ENCODE measurements at regions of chr2 and their contacts with region 1.

Region 1: GRCh38 chr2:42095923-42096408 is 48.1 kb downstream of the PKDCC start:
- DNase-seq: peak; percentile 86
- ATAC-seq: peak; percentile 64
- H3K4me3 Mint-ChIP-seq: no peak overlapping the region
- H3K27ac Mint-ChIP-seq: no peak overlapping the region
- H3K4me1 Mint-ChIP-seq: peaks cover 32% of the 10 kb centered on the region
- H3K27me3 Mint-ChIP-seq: no peaks in the 10 kb centered on the region

Region 2: DNA sequence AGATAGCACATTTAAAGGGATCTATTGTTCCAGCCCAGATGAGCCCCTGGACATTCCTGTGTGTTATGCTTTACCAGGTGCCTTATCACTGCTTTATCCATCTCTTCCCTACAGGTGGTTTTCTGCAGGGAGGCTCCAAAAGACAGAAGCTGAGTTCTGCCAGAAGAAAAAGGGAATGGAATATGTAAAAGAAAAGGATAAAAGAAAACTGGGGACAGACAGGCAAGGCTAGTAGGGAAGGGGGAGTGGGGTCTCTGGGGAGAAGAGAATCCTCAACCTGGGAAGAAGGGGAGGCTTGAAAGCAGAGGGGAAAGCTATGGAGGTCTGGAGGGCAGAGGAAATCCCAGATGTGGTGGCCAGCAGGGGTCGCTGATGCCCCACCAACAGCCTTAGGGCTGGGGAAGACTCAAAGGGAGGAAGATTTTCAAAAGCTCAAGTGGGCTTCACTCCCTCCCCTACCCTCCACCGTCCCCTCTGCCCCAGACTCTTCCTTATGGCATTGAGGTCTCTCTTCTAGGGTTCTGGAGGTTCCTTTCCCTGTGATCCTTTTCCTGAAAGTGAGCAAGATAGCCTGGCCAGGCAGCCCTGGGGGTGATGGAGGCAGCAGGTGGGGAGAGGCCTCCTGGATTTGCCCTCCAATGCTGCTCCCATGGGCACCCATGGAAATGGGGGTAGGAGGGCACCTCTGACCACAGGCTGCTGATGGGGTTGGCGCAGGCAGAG is 226.3 kb before region 1 on chr2:
- CTCF ChIA-PET with region 1: interaction called, 304 read pairs
- POLR2A ChIA-PET with region 1: no interaction called
- intact Hi-C with region 1: no loop called
- DNase-seq: peak; percentile 86
- ATAC-seq: peak; percentile 85
- H3K4me3 Mint-ChIP-seq: no peak overlapping the region
- H3K27ac Mint-ChIP-seq: no peak overlapping the region
- H3K4me1 Mint-ChIP-seq: peaks cover 6% of the 10 kb centered on the region
- H3K27me3 Mint-ChIP-seq: peaks cover 9% of the 10 kb centered on the region

Region 3: GRCh38 chr2:42196403-42197267 is 100.7 kb after region 1 on chr2:
- CTCF ChIA-PET with region 1: interaction called, 20 read pairs
- POLR2A ChIA-PET with region 1: no interaction called
- intact Hi-C with region 1: loop called (anchors 1 kb)
- DNase-seq: peak; percentile 53
- ATAC-seq: peak; percentile 51
- H3K4me3 Mint-ChIP-seq: no peak overlapping the region
- H3K27ac Mint-ChIP-seq: peak overlapping the region; percentile 5
- H3K4me1 Mint-ChIP-seq: peaks cover 80% of the 10 kb centered on the region
- H3K27me3 Mint-ChIP-seq: no peaks in the 10 kb centered on the region

Region 4: DNA sequence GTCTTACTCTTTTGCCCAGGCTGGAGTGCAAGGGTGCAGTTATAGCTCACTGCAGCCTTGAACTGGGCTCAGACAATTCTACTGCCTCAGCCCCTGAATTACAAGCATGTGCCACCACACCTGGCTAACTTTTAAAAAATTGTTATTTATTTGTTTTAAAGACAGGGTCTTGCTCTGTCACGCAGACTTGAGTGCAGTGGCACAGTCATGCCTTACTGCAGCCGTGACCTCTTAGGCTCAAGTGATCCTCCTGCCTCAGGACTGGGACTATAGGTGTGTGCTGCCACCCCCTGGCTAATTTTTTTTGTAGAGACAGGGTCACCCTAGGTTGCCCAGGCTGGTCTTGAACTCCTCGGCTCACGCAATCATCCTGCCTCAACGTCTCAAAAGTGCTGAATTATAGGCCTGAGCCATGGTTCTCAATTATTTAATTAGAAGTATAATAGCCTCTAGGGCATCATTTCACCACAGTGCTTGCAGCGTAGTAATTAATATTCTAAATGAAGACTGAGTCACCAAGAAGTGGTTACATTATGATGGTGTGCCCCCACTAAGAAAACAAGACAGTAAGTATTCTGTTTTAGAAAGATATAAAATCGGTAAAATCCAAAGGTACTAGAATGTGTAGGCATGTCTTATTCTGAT is 142.8 kb after region 1 on chr2:
- CTCF ChIA-PET with region 1: interaction called, 64 read pairs
- POLR2A ChIA-PET with region 1: no interaction called
- intact Hi-C with region 1: loop called (anchors 1 kb)
- DNase-seq: peak; percentile 66
- ATAC-seq: peak; percentile 91
- H3K4me3 Mint-ChIP-seq: no peak overlapping the region
- H3K27ac Mint-ChIP-seq: no peak overlapping the region
- H3K4me1 Mint-ChIP-seq: peaks cover 79% of the 10 kb centered on the region
- H3K27me3 Mint-ChIP-seq: no peaks in the 10 kb centered on the region

Region 5: DNA sequence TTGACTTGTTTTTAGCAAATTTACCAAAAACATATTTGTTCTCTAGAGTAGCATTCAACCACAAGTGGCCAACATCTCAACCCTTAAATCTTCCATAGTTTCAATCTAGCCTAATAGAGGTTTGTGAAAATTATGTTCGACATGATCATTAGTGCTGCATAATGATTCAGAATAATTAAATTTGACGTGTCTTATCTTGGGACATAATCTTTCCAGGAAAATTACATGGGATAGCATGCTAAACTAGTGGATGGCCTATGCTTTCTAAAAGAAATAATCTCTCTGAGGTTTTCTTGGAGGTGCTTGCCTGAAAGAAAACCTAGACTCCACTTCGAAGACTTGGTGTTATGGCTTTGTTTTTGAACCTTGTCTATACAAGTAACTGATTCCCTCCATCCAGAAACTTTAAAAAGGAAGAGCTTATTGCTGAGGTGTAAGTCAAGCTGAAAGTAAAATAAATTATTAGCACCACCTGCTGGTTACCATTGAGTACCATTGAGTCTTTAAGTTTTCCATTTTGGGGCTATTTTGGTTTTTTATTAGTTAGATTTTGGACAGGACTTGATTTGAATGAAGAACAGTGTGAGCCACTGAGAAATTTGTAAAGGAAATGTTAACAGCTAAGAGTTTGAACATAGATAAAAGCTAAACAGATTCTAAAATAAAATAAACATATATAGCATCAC is 232.3 kb after region 1 on chr2:
- CTCF ChIA-PET with region 1: interaction called, 40 read pairs
- POLR2A ChIA-PET with region 1: no interaction called
- intact Hi-C with region 1: loop called (anchors 1 kb)
- DNase-seq: no peak
- ATAC-seq: no peak
- H3K4me3 Mint-ChIP-seq: no peak overlapping the region
- H3K27ac Mint-ChIP-seq: peak overlapping the region; percentile 3
- H3K4me1 Mint-ChIP-seq: peaks cover 16% of the 10 kb centered on the region
- H3K27me3 Mint-ChIP-seq: no peaks in the 10 kb centered on the region

Measured in activated CD4-positive, alpha-beta T cell treated with anti-CD3 and anti-CD28 coated beads for 36 hours (primary cell).